Vagina (tissue), 2 donors: ENCODE measurements at regions of chr15 and their contacts with region 1.

Region 1: GRCh38 chr15:62770752-62771151 is 271.8 kb upstream of the TPM1 start:
- DNase-seq: no peak
- H3K4me3 ChIP-seq: no peak overlapping the region
- H3K27ac ChIP-seq: no peak overlapping the region
- H3K4me1 ChIP-seq: no peaks in the 10 kb centered on the region
- H3K27me3 ChIP-seq: no peaks in the 10 kb centered on the region
- CTCF ChIP-seq: no peak
- POLR2A ChIP-seq: no peak

Region 2: DNA sequence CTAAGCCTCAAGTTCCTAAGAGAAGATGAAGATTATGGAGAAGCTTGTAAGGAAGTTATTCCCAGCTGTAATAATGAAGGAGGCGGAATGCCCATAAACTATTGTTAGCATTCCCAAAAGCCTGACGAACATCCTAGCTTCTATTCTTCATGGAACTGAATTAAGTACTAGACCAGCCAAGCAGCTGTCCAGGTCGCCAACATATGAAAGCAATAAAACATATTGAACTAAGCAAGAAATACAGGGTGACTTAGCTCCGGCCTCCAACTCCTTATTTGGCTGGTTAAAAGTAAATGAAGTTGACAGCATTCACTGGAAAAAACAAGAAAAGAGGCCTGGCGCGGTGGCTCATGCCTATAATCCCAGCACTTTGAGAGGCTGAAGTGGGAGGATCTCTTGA is 97.8 kb after region 1 on chr15:
- intact Hi-C with region 1: loop called (anchors 10 kb)
- DNase-seq: no peak
- H3K4me3 ChIP-seq: no peak overlapping the region
- H3K27ac ChIP-seq: peak overlapping the region; percentile 69
- H3K4me1 ChIP-seq: no peaks in the 10 kb centered on the region
- H3K27me3 ChIP-seq: no peaks in the 10 kb centered on the region
- CTCF ChIP-seq: no peak
- POLR2A ChIP-seq: no peak